PC-9 (cell line): ENCODE measurements at regions of chr1 and their contacts with region 1.

Region 1: GRCh38 chr1:235328357-235329138 is at the start of gene GGPS1:
- DNase-seq: peak; percentile 97 to 99
- H3K4me3 ChIP-seq: peak within 1 kb of the TSS; percentile 89
- H3K27ac ChIP-seq: peak within 1 kb of the TSS; percentile 79
- H3K4me1 ChIP-seq: peaks cover 47% of the 10 kb centered on the region
- H3K27me3 ChIP-seq: no peaks in the 10 kb centered on the region
- CTCF ChIP-seq: no peak
- total RNA-seq, gene GGPS1: 47.4 and 61.7 TPM in 2 replicates

Region 2: GRCh38 chr1:235128456-235129328 is 199.9 kb before region 1 on chr1 and contains the start of gene TOMM20:
- CTCF ChIA-PET with region 1: no interaction called
- POLR2A ChIA-PET with region 1: no interaction called
- intact Hi-C with region 1: loop called (anchors 10 kb)
- DNase-seq: peak; percentile 93 to 98
- H3K4me3 ChIP-seq: peak within 1 kb of the TSS; percentile 90
- H3K27ac ChIP-seq: peak within 1 kb of the TSS; percentile 74
- H3K4me1 ChIP-seq: peaks cover 43% of the 10 kb centered on the region
- H3K27me3 ChIP-seq: no peaks in the 10 kb centered on the region
- CTCF ChIP-seq: no peak
- total RNA-seq, gene TOMM20: 165 and 187 TPM in 2 replicates

Region 3: GRCh38 chr1:235246022-235246991 is 82.2 kb before region 1 on chr1:
- CTCF ChIA-PET with region 1: no interaction called
- POLR2A ChIA-PET with region 1: interaction called, 33 read pairs
- intact Hi-C with region 1: no loop called
- DNase-seq: peak in 1 of 2 experiments; percentile 53
- H3K4me3 ChIP-seq: no peak overlapping the region
- H3K27ac ChIP-seq: no peak overlapping the region
- H3K4me1 ChIP-seq: peaks cover 15% of the 10 kb centered on the region
- H3K27me3 ChIP-seq: no peaks in the 10 kb centered on the region
- CTCF ChIP-seq: no peak

Region 4: GRCh38 chr1:235307158-235308124 is 21.1 kb before region 1 on chr1:
- CTCF ChIA-PET with region 1: no interaction called
- POLR2A ChIA-PET with region 1: interaction called, 22 read pairs
- intact Hi-C with region 1: no loop called
- DNase-seq: no peak
- H3K4me3 ChIP-seq: no peak overlapping the region
- H3K27ac ChIP-seq: no peak overlapping the region
- H3K4me1 ChIP-seq: no peaks in the 10 kb centered on the region
- H3K27me3 ChIP-seq: no peaks in the 10 kb centered on the region
- CTCF ChIP-seq: no peak

Region 5: DNA sequence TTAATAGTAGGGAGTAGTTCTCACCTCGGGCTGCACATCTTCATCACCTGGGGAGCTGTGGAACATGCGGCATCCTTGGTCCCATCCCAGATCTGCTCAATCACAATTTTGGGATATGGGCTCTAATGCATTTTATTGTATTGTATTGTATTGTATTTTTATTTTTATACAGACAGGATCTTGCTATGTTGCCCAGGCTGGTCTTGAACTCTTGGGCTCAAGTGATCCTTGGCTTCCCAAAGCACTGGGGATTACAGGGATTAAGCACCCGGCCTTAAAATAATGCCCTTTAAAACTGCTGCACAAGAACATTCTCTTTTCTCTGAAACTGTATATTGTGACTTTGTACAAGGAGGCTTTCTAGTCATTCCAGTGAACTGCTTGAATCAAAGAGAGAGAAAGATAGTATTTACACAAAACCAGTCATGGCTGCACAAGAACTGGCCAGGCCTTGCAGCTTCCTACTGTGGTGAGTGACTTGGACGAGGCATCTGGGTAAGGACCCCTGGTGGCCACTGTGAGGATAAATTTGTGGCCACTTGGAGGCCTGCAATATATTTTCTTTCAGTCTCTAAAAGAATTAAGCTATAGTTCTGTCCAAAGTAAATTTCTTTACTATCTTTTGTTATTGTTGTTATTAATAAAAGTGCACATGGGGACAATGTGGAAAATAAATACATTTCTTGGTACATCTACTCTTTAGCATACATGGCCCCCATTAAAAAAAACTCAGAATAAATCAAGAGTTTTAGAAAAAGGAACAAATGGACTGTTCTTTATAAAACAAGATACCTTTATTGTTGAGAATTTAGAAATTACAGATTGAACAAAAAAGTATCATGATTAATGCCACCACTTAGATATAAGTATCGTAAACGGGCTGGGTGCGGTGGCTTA is 86.7 kb after region 1 on chr1:
- CTCF ChIA-PET with region 1: interaction called, 5 read pairs
- POLR2A ChIA-PET with region 1: interaction called, 4 read pairs
- intact Hi-C with region 1: loop called (anchors 1 kb)
- DNase-seq: peak; percentile 68 to 69
- H3K4me3 ChIP-seq: no peak overlapping the region
- H3K27ac ChIP-seq: no peak overlapping the region
- H3K4me1 ChIP-seq: 0 out of 2 replicates have a peak, but pooled peaks cover 5% of the 10 kb centered on the region
- H3K27me3 ChIP-seq: no peaks in the 10 kb centered on the region
- CTCF ChIP-seq: peak; percentile 89

Region 6: DNA sequence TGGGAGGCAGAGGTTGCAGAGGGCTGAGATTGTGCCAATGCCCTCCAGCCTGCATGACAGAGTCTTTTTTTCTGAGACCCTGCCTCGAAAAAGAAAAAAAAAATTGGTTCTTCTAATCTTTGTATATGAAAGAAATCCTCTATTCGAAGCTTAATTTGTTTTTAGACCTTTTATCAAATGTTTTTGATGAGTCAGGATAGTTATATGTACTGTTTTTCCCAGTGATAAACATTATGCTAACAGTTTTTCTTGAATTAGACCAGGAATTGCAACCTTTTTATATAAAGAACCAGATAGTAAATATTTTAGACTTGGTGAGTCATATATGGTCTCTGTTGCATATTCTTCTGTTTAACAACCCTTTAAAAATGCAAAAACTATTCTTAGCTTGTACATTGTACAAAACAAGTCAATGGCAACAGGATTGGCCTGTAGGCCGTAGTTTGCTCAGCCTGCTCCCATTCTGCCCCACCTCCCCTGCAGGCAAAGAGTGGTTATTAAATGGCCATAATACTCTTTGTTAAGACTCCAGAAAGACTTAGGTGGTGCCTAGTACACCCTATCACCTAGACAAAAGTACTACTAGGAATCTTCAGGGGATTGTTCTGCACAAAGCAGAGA is 492.9 kb after region 1 on chr1:
- CTCF ChIA-PET with region 1: no interaction called
- POLR2A ChIA-PET with region 1: interaction called, 15 read pairs
- intact Hi-C with region 1: no loop called
- DNase-seq: no peak
- H3K4me3 ChIP-seq: no peak overlapping the region
- H3K27ac ChIP-seq: no peak overlapping the region
- H3K4me1 ChIP-seq: peaks cover 9% of the 10 kb centered on the region
- H3K27me3 ChIP-seq: no peaks in the 10 kb centered on the region
- CTCF ChIP-seq: no peak